Sigmoid colon (tissue), 7 donors: ENCODE measurements at regions of chr10 and their contacts with region 1.

Region 1: DNA sequence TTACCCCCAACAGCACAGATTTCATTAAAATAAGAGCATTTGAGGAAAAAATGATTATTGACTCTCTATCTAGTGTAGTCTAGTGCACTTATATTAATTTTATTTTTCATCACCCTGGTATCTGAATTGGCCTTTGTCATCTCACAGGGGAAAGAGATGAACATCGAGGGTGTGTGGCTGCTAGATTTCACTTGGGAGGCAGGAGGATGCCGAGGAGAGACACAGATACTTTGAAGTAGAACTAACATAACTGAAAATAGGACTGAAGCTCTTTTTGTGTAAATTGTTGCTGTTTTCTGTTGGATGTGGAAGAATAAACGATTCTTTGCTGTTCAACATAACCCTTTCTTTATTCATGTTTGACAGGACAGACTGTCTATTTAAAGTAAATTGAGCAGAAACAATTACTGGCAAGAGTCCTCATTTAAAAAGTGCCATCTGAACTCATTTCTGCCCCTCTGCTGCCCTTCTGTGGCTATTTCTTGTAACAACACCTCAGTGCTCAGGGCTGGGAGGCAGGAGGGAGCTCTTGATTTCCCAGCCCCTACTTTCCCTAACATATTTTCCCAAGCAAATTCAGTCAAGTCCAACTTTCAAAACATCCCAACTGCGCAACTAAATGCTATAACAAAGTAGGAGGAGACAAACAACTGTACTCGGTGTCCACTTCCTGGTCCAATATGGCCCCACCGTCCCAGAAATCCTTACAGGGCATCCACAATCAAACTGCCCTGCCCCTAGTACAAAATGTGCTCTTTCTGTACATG is 15.6 kb downstream of the LYZL1 start:
- DNase-seq: peak; percentile 77
- H3K4me3 ChIP-seq: peak overlapping the region in 1 of 4 donors; percentile 13
- H3K27ac ChIP-seq: peak overlapping the region in 1 of 4 donors; percentile 37
- H3K4me1 ChIP-seq: peaks cover 0 to 11% (median 9%) of the 10 kb centered on the region in 4 donors
- H3K27me3 ChIP-seq: no peaks in the 10 kb centered on the region
- CTCF ChIP-seq: peak; percentile 77 to 82 (median 78)
- EP300 ChIP-seq: no peak
- POLR2A ChIP-seq: no peak

Region 2: DNA sequence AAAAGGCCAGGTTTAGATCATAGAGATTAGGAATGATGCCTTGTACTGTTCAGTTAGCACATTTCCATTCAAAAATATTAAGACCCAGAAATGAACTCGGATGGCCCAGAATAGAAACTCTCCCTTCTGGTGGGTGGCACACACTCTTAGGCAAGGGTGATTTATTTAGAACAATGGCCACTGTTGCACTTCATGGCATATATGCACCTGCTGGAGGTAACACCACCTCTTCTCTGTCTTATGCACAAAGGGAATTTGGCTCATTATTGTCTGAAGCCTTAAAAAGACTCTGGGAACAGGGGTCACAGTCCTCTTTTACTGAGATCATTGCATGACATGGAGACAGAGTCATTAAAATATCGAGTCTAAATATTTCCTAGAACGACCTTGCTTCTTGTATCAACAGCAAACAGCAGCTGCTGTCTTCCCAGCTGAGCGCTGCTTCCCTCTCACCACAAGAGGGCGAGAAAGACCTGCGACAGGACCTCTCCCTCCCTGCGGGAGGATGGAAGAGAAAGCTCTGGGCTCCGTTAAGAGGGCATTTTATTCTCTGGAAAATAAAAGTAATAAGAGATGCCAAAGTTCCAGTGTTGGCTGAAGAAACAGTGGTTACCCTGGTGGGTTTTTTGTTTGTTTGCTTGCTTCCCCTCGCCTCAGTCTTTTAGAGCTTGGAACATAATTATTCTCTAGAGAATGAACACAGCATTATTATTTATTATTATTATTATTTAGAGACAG is 640.7 kb before region 1 on chr10:
- intact Hi-C with region 1: loop called (anchors 1 kb)
- DNase-seq: peak; percentile 89
- H3K4me3 ChIP-seq: no peak overlapping the region
- H3K27ac ChIP-seq: no peak overlapping the region
- H3K4me1 ChIP-seq: peaks cover 0 to 5% (median 4%) of the 10 kb centered on the region in 4 donors
- H3K27me3 ChIP-seq: peaks cover 0 to 19% (median 10%) of the 10 kb centered on the region in 3 donors
- CTCF ChIP-seq: peak; percentile 82 to 93 (median 90)
- EP300 ChIP-seq: no peak
- POLR2A ChIP-seq: no peak

Region 3: DNA sequence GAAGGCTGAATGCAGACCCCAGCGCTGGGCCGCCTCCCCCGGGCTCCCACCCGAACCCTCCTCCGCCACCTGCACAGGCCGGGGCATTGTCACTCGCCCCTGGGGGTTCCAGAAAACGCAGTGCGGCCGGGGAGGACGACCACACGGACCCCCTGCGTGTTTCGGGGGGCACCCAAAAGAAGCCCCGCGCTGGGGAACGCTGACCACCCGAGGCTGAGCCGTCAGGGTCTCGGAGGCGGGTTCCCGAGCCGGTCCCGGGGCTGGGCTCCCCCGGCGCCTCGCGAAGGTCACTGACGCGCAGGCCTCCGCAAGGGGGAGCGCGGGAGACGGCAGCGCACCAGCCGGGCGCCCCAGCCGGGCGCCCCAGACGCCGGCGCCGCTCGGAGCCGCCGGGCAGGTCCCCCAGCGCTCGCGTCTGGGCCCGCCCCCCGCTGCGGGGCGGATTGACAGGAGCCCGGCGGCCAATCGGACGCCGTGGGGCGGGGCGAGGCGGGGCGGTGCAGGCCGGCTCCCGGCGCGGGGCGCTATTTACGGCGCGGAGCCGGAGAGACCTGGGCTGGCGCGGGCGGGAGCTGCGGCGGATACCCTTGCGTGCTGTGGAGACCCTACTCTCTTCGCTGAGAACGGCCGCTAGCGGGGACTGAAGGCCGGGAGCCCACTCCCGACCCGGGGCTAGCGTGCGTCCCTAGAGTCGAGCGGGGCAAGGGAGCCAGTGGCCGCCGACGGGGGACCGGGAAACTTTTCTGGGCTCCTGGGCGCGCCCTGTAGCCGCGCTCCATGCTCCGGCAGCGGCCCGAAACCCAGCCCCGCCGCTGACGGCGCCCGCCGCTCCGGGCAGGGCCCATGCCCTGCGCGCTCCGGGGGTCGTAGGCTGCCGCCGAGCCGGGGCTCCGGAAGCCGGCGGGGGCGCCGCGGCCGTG is 627.2 kb before region 1 on chr10 and contains the start of gene BAMBI:
- intact Hi-C with region 1: loop called (anchors 1 kb)
- DNase-seq: peak; percentile 94
- H3K4me3 ChIP-seq: peak within 1 kb of the TSS; percentile 59 to 93 (median 78)
- H3K27ac ChIP-seq: peak within 1 kb of the TSS; percentile 64 to 86 (median 77)
- H3K4me1 ChIP-seq: peaks cover 0 to 49% (median 40%) of the 10 kb centered on the region in 4 donors
- H3K27me3 ChIP-seq: peaks cover 0 to 11% (median 0%) of the 10 kb centered on the region in 3 donors
- CTCF ChIP-seq: peak; percentile 36 to 60 (median 53)
- EP300 ChIP-seq: no peak
- POLR2A ChIP-seq: peak; percentile 40 to 47
- total RNA-seq, gene BAMBI: 3.6 to 5.3 (median 5.0) TPM

Region 4: DNA sequence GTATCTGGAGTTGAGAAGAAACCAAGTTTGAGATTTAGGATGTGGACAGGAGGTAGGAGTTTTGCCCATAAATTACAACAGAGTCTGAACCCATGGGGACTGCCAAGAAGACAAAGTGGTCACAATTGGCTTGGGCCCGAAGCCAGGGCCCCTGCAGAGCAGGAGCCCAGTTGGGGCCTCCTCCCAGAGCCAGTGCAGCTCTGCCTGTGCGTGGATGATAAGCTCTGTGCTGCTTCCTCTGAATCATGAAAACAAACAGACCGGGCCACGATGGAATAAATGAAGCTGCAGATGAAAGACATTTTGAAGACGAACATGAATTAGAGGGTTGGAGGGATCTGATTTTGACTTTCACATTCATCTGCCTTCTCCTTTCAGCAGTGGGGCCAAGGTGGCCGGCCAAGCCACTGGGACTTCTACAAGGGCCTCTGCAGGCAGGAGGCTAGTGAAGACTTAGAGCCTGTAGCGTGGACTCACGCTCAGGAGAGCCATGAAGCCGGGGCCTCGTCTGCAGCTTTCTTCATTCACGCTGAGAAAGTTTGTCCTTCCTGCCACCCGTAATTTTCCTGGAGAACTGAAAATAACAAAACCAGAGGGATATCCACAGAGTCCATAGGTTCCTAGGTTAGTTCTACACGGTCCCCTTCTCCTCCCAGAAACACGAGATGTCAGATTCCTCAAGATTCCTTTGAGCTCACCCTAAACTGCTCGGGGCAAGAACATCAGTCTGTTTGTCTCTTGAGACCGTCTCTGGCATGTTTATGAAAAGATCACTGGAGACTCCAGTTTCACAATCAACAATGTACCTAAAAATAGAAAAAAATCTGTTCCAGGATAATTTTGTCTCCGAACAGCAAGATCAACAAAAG is 172.3 kb before region 1 on chr10:
- intact Hi-C with region 1: loop called (anchors 5 kb)
- DNase-seq: no peak
- H3K4me3 ChIP-seq: no peak overlapping the region
- H3K27ac ChIP-seq: no peak overlapping the region
- H3K4me1 ChIP-seq: peaks cover 0 to 5% (median 0%) of the 10 kb centered on the region in 4 donors
- H3K27me3 ChIP-seq: no peaks in the 10 kb centered on the region
- CTCF ChIP-seq: no peak
- EP300 ChIP-seq: no peak
- POLR2A ChIP-seq: no peak

Region 5: GRCh38 chr10:29189256-29189655 is 115.2 kb before region 1 on chr10:
- intact Hi-C with region 1: no loop called
- DNase-seq: no peak
- H3K4me3 ChIP-seq: no peak overlapping the region
- H3K27ac ChIP-seq: no peak overlapping the region
- H3K4me1 ChIP-seq: no peaks in the 10 kb centered on the region
- H3K27me3 ChIP-seq: no peaks in the 10 kb centered on the region
- CTCF ChIP-seq: no peak
- EP300 ChIP-seq: no peak
- POLR2A ChIP-seq: no peak

Region 6: DNA sequence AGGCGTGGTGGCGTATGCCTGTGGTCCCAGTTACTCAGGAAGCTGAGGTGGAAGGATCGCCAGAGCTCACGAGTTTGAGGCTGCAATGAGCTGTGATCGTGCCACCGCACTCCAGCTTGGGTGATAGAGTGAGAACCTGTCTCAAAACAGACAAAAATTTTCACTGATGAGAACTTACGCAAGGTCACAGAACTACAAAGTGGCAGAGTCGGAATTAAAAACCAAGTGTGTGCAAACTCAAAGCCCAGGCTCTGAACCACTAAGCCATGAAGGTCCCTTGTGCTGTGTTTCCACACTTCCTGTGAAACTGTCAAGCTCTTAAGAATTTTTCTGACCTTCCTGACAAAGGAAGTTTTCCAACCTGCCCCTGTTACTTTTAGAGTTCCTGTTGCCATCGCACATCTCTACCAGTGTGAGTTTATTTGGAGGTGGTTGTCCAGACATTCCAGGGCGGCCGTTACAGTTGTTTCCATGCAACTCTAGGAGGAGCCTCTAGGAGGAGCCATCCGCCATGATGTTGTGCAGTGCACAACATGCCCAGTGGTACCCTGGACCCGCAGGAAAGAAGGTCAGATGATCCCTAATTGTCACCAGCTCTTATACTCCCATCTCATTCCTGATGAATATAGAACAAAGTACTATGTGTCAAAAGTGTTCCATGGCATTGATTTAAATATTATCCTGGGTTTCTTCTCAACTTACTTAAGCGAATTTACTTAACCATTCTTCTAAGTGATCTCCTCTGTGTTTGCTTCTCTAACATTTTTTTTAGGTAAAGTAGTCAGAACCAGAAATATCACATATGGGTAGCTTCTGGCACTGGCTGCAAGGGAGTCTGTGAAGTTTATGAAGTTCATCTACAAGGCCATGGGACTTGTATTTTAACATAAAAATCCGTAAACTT is 64.6 kb before region 1 on chr10:
- intact Hi-C with region 1: loop called (anchors 5 kb)
- DNase-seq: no peak
- H3K4me3 ChIP-seq: no peak overlapping the region
- H3K27ac ChIP-seq: no peak overlapping the region
- H3K4me1 ChIP-seq: no peaks in the 10 kb centered on the region
- H3K27me3 ChIP-seq: no peaks in the 10 kb centered on the region
- CTCF ChIP-seq: peak in 2 of 4 experiments; percentile 36 to 37
- EP300 ChIP-seq: no peak
- POLR2A ChIP-seq: no peak

Region 7: GRCh38 chr10:29257106-29257783 is 47.2 kb before region 1 on chr10:
- intact Hi-C with region 1: loop called (anchors 5 kb)
- DNase-seq: peak; percentile 93
- H3K4me3 ChIP-seq: no peak overlapping the region
- H3K27ac ChIP-seq: peak overlapping the region in 3 of 4 donors; percentile 65 to 74 (median 74)
- H3K4me1 ChIP-seq: peaks cover 0 to 29% (median 24%) of the 10 kb centered on the region in 4 donors
- H3K27me3 ChIP-seq: no peaks in the 10 kb centered on the region
- CTCF ChIP-seq: no peak
- EP300 ChIP-seq: peak in 1 of 4 donors; percentile 26
- POLR2A ChIP-seq: no peak

Region 8: DNA sequence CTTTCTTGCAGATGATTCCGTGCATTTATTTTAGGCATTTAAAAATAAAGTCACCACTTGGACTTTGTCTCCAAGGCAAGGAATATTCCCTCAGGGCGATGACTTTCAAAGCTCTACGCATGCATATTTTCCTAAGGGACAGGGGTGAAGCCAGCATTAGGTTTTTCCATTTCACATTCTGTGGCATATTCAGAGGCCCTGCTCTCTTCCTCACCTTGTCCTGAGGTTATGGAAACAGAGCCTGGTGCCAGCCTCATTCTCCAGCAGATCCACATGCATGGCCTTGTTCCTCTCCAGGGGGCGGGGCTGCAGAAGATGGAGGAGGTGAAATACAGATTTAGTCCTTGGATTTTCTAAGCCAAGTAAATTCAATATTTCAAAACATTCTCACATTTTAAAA is 27.2 kb before region 1 on chr10:
- intact Hi-C with region 1: no loop called
- DNase-seq: no peak
- H3K4me3 ChIP-seq: no peak overlapping the region
- H3K27ac ChIP-seq: no peak overlapping the region
- H3K4me1 ChIP-seq: no peaks in the 10 kb centered on the region
- H3K27me3 ChIP-seq: no peaks in the 10 kb centered on the region
- CTCF ChIP-seq: no peak
- EP300 ChIP-seq: no peak
- POLR2A ChIP-seq: no peak